ENCODE measurements at regions of chr6 and their contacts with region 1.

Region 1: DNA sequence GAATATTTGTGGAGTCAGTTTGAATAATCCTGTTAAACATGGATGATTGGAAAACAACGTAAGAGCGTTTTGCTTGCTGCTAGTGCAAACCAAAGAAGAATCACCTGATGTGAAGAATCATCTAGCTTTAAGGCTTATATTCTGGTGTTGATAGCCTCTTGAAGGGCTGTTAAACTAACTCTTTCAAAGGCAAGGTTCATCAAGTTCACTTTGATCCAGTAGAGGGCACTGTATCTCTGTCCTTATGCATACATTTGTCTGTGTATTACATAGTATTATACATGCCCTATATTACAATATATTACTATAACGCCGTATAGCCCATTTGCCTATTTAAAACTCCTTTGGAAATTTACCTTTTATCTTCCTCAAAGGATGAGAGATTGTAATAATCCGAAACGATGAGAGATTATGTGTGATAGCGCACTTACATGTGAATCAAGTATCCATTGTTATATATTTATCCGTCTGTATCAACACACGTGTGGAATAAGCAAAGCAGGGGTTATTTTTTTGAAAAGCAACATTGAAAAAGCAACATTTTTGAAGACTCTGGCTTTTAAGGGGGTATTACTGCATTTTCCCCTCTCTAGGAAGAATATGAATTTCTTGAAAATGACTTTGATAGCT is 50.8 kb upstream of the NRN1 start:
- DNase-seq: no peak
- ATAC-seq: no peak
- H3K4me3 ChIP-seq: no peak overlapping the region
- H3K27ac ChIP-seq: no peak overlapping the region
- H3K4me1 ChIP-seq: no peaks in the 10 kb centered on the region
- H3K27me3 ChIP-seq: no peaks in the 10 kb centered on the region
- CTCF ChIP-seq: peak in 3 of 5 experiments; percentile 20 to 43 (median 41)
- POLR2A ChIP-seq: no peak

Region 2: GRCh38 chr6:6556738-6557505 is 499.4 kb after region 1 on chr6:
- in situ Hi-C with region 1: loop called in 1 of 4 experiments (anchors 10 kb)
- intact Hi-C with region 1: no loop called
- DNase-seq: no peak
- ATAC-seq: peak in 1 of 2 donors; percentile 55
- H3K4me3 ChIP-seq: no peak overlapping the region
- H3K27ac ChIP-seq: no peak overlapping the region
- H3K4me1 ChIP-seq: no peaks in the 10 kb centered on the region
- H3K27me3 ChIP-seq: peaks cover 0 to 6% (median 0%) of the 10 kb centered on the region in 3 donors
- CTCF ChIP-seq: peak in 4 of 5 experiments; percentile 20 to 69 (median 49)
- POLR2A ChIP-seq: no peak